ENCODE measurements at regions of chr7 and their contacts with region 1.

Region 1: GRCh38 chr7:151251328-151251972 is 3.0 kb upstream of the SMARCD3 start:
- DNase-seq: peak; percentile 33
- H3K4me3 ChIP-seq: peak overlapping the region in 2 of 3 experiments; percentile 42 to 50
- H3K27ac ChIP-seq: no peak overlapping the region
- H3K4me1 ChIP-seq: peaks cover 22% of the 10 kb centered on the region
- H3K27me3 ChIP-seq: peaks cover 2% of the 10 kb centered on the region
- CTCF ChIP-seq: no peak

Region 2: DNA sequence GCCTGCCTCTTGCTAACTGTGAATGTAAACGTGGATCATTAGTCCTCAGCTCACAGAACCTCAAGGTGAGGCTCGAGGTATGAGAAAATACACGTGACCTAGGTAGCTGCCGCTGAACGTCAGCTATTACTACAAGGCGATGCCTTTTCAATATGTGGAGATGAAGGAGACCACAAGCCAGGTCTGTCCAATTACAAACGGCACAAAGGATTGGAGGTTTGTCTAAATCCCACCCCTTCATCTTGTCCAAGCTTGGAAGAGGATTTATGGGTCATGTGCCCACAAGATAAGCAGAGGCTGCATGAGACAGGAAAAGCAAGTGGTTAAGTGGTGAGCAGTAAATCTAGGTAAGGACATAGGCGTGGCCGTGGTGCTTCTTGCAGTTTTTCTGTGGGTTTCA is 44.5 kb before region 1 on chr7:
- CTCF ChIA-PET with region 1: no interaction called
- dilution Hi-C with region 1: loop called (anchors 5 kb)
- in situ Hi-C with region 1: no loop called
- intact Hi-C with region 1: no loop called
- DNase-seq: peak; percentile 9
- H3K4me3 ChIP-seq: no peak overlapping the region
- H3K27ac ChIP-seq: no peak overlapping the region
- H3K4me1 ChIP-seq: no peaks in the 10 kb centered on the region
- H3K27me3 ChIP-seq: no peaks in the 10 kb centered on the region
- CTCF ChIP-seq: no peak

Region 3: DNA sequence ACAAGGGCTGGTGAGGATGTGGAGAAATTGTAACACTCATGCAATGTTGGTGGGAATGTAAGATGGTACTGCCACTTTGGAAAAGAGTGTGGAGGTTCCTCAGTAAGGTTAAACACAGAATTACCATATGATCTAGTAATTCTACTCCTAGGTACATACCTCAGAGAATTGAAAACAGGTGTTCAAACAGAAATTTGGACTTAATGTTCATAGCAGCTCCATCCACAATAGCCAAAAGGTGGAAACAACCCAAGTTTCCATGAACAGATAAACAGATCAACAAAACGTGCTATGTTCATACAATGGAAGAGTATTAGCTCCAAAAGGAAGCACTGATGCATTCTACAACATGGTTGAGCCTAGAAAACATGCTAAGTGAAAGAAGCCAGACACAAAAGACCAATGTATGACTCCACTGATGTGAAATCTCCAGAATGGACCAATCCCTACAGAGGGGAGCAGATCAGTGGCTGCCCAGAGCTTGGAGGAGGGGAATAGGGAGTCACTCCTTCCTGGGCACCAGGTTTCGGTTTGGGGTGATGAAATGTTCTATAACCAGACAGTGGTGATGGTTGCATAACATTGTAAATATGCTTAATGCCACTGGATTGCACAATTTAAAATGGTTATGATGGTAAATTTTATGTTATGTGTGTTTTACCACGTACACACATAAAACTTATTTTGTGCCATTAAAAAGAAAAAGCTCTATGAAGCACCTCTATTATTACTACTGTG is 164.1 kb after region 1 on chr7:
- CTCF ChIA-PET with region 1: no interaction called
- dilution Hi-C with region 1: no loop called
- in situ Hi-C with region 1: no loop called
- intact Hi-C with region 1: no loop called
- DNase-seq: peak; percentile 74
- H3K4me3 ChIP-seq: no peak overlapping the region
- H3K27ac ChIP-seq: no peak overlapping the region
- H3K4me1 ChIP-seq: peaks cover 3% of the 10 kb centered on the region
- H3K27me3 ChIP-seq: peaks cover 9% of the 10 kb centered on the region
- CTCF ChIP-seq: no peak